ENCODE measurements at regions of chr11 and their contacts with region 1.

Region 1: GRCh38 chr11:112588252-112588694 is 327.6 kb upstream of the PLET1 start:
- DNase-seq: peak; percentile 80
- H3K4me3 Mint-ChIP-seq: no peak overlapping the region
- H3K27ac Mint-ChIP-seq: no peak overlapping the region
- H3K4me1 Mint-ChIP-seq: peaks cover 2% of the 10 kb centered on the region
- H3K27me3 Mint-ChIP-seq: peaks cover 3% of the 10 kb centered on the region

Region 2: GRCh38 chr11:112795142-112795815 is 207.0 kb after region 1 on chr11:
- intact Hi-C with region 1: loop called (anchors 2 kb)
- DNase-seq: peak; percentile 67
- H3K4me3 Mint-ChIP-seq: no peak overlapping the region
- H3K27ac Mint-ChIP-seq: no peak overlapping the region
- H3K4me1 Mint-ChIP-seq: peaks cover 4% of the 10 kb centered on the region
- H3K27me3 Mint-ChIP-seq: no peaks in the 10 kb centered on the region

Region 3: GRCh38 chr11:113289431-113290187 is 701.3 kb after region 1 on chr11:
- intact Hi-C with region 1: loop called (anchors 1 kb)
- DNase-seq: peak; percentile 90
- H3K4me3 Mint-ChIP-seq: no peak overlapping the region
- H3K27ac Mint-ChIP-seq: no peak overlapping the region
- H3K4me1 Mint-ChIP-seq: no peaks in the 10 kb centered on the region
- H3K27me3 Mint-ChIP-seq: peaks cover 5% of the 10 kb centered on the region